Activated CD4-positive, alpha-beta T cell treated with anti-CD3 and anti-CD28 coated beads for 36 hours (primary cell): ENCODE measurements at regions of chr20 and their contacts with region 1.

Region 1: GRCh38 chr20:31717478-31718201 is 5.0 kb downstream of the BCL2L1 start:
- DNase-seq: peak; percentile 38
- ATAC-seq: peak; percentile 55
- H3K4me3 Mint-ChIP-seq: peak overlapping the region; percentile 97
- H3K27ac Mint-ChIP-seq: peak overlapping the region; percentile 94
- H3K4me1 Mint-ChIP-seq: peaks cover 52% of the 10 kb centered on the region
- H3K27me3 Mint-ChIP-seq: no peaks in the 10 kb centered on the region

Region 2: GRCh38 chr20:31605031-31605901 is 112.4 kb before region 1 on chr20 and contains the start of gene ID1:
- CTCF ChIA-PET with region 1: interaction called, 16 read pairs
- POLR2A ChIA-PET with region 1: interaction called, 3 read pairs
- intact Hi-C with region 1: loop called in 1 of 2 experiments (anchors 1 kb)
- DNase-seq: peak; percentile 93
- ATAC-seq: peak; percentile 82
- H3K4me3 Mint-ChIP-seq: peak within 1 kb of the TSS; percentile 91
- H3K27ac Mint-ChIP-seq: peak within 1 kb of the TSS; percentile 73
- H3K4me1 Mint-ChIP-seq: peaks cover 26% of the 10 kb centered on the region
- H3K27me3 Mint-ChIP-seq: peaks cover 43% of the 10 kb centered on the region
- total RNA-seq, gene ID1: 2.2 to 3.5 TPM

Region 3: DNA sequence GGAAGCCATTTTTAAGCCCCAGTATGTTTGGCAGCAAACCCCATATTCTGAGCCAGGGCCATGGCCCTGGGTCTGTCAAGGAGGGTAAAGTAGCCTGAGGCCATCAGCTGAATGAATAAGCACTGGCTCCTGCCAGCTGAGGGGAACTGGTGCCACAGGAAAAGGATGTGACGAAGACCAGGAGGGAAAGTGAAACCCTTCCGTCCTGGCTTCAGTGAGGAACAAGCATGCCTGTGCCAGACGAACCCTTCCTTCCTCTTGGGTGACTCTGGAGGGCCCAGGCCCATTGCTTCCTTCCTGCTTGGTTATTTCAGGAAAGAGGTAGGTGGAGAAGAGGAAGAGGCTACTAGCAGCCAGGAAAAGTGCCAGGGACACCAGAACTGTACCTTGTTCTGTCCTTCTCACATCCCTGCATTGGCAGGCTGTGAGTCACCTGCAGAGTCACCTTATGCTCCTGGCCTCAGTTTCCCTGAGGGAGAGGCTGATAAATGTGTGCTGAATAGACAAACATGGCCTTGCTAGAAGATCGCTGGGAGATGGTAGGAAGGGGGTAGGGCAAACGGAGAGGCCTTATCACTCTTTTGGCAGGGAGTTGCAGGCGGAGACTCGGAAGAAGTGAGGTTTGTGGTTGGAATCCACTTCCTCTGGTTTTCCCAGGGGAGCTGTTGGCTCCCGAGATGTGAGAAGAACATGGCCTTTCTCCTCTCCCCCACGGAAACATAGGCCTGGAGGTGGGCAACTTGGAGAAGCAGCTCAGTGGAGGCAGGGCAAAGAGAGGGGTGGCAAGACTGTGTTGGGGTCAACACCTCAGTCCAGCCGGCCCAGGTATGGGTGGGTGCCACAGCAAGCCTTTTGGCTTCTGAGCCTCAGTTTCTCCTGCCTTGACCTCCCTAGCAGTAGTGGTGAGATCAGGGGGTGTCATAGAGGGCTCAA is 42.5 kb before region 1 on chr20:
- CTCF ChIA-PET with region 1: interaction called, 56 read pairs
- POLR2A ChIA-PET with region 1: interaction called, 10 read pairs
- intact Hi-C with region 1: loop called (anchors 1 kb)
- DNase-seq: peak; percentile 81
- ATAC-seq: peak; percentile 72
- H3K4me3 Mint-ChIP-seq: peak overlapping the region; percentile 91
- H3K27ac Mint-ChIP-seq: peak overlapping the region; percentile 100
- H3K4me1 Mint-ChIP-seq: peaks cover 79% of the 10 kb centered on the region
- H3K27me3 Mint-ChIP-seq: no peaks in the 10 kb centered on the region

Region 4: DNA sequence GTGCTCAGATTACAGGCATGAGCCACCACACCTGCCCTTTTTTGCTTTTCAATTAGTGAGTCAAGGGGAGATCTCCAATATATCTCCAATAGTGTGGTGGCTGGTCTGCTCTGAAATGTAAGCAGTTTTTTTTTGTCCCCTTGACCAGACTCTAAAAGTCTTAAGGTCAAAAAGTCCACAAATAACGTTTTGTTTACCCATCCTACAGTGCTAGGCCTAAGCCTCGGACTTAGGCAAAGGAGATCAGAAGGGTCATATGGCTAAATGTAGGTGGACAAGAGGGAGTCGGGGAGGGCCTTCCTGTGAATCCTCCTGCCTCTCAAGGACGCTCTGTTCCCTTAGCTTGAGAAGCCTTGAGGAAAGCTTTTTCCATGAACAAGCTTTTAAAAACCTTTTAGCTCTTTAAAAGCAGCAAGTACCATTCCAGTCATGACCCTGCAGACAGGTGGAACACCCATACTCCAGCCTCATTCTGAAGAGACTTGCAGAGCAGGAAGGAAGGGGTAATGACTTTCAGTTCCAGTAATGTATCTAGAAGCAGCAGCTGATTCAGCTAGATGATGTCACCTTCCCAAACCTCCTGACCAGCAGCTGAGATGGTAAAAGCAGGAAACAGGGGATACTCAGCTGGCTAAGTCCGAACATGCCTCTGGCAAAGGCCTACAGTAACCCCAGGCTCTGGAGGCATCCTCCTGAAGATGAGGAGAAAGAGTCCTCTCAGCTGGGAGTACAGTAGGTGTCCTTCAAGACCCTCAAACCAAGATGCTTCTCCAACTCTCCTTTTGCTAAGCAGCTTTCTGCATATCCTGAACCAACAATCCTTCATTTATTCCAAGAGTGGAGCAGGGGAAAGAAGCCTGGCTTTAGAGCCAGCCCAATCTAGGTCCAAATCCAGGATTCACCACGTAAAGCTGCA is 18.6 kb before region 1 on chr20:
- CTCF ChIA-PET with region 1: interaction called, 10 read pairs
- POLR2A ChIA-PET with region 1: no interaction called
- intact Hi-C with region 1: loop called in 1 of 2 experiments (anchors 1 kb)
- DNase-seq: peak; percentile 46
- ATAC-seq: peak; percentile 93
- H3K4me3 Mint-ChIP-seq: peak overlapping the region; percentile 26
- H3K27ac Mint-ChIP-seq: peak overlapping the region; percentile 89
- H3K4me1 Mint-ChIP-seq: peaks cover 68% of the 10 kb centered on the region
- H3K27me3 Mint-ChIP-seq: no peaks in the 10 kb centered on the region